ENCODE measurements at regions of chr14 and their contacts with region 1.

Region 1: GRCh38 chr14:69726761-69727511 is 40.0 kb upstream of the SRSF5 start:
- DNase-seq: peak; percentile 19
- ATAC-seq: peak; percentile 97
- H3K4me3 ChIP-seq: peak overlapping the region; percentile 58; the same call in 1 of the 2 replicates
- H3K27ac ChIP-seq: no peak overlapping the region
- H3K4me1 ChIP-seq: peaks cover 4% of the 10 kb centered on the region; the same call in 1 of the 2 replicates
- H3K27me3 ChIP-seq: no peaks in the 10 kb centered on the region
- CTCF ChIP-seq: peak; percentile 94 to 98 (median 96)
- EP300 ChIP-seq: no peak
- POLR2A ChIP-seq: no peak
- RAD21 ChIP-seq: peak; percentile 99

Region 2: GRCh38 chr14:69242311-69243224 is 484.4 kb before region 1 on chr14:
- CTCF ChIA-PET with region 1: no interaction called
- POLR2A ChIA-PET with region 1: no interaction called
- RAD21 ChIA-PET with region 1: no interaction called
- SMC1A ChIA-PET with region 1: interaction called, 5 read pairs
- in situ Hi-C with region 1: loop called (anchors 25 kb)
- intact Hi-C with region 1: no loop called
- DNase-seq: peak; percentile 13
- ATAC-seq: peak; percentile 89
- H3K4me3 ChIP-seq: no peak overlapping the region
- H3K27ac ChIP-seq: no peak overlapping the region
- H3K4me1 ChIP-seq: no peaks in the 10 kb centered on the region
- H3K27me3 ChIP-seq: no peaks in the 10 kb centered on the region
- CTCF ChIP-seq: peak; percentile 62 to 77 (median 69)
- EP300 ChIP-seq: no peak
- POLR2A ChIP-seq: no peak
- RAD21 ChIP-seq: peak; percentile 69

Region 3: DNA sequence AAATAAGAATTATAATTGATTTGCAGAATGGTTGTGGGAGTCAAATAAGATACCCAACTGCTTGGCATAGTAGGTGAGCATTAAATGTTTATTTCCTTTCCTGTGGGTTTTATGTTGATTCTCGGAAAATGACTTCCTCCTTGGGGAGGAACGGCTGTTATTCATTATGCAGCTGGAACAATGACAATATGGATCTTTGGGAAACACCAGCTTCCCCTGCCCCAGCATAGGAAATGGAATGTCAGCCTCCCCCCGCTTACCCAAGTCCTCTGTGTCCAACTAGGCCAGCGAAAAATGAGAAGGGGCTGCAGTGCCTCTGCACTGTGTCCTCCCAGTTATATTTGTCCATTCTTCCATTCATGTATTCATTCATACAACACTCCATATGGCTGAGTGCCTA is 140.5 kb before region 1 on chr14:
- CTCF ChIA-PET with region 1: interaction called, 16 read pairs
- POLR2A ChIA-PET with region 1: no interaction called
- RAD21 ChIA-PET with region 1: interaction called, 8 read pairs
- SMC1A ChIA-PET with region 1: interaction called, 12 read pairs
- in situ Hi-C with region 1: loop called (anchors 5 kb)
- intact Hi-C with region 1: loop called (anchors 1 kb)
- DNase-seq: no peak
- ATAC-seq: no peak
- H3K4me3 ChIP-seq: no peak overlapping the region
- H3K27ac ChIP-seq: no peak overlapping the region
- H3K4me1 ChIP-seq: no peaks in the 10 kb centered on the region
- H3K27me3 ChIP-seq: no peaks in the 10 kb centered on the region
- CTCF ChIP-seq: no peak
- EP300 ChIP-seq: no peak
- POLR2A ChIP-seq: no peak
- RAD21 ChIP-seq: no peak

Region 4: GRCh38 chr14:69600304-69600891 is 126.5 kb before region 1 on chr14:
- CTCF ChIA-PET with region 1: interaction called, 90 read pairs
- POLR2A ChIA-PET with region 1: interaction called, 4 read pairs
- RAD21 ChIA-PET with region 1: interaction called, 38 read pairs
- SMC1A ChIA-PET with region 1: interaction called, 85 read pairs
- in situ Hi-C with region 1: loop called (anchors 5 kb)
- intact Hi-C with region 1: loop called (anchors 1 kb)
- DNase-seq: no peak
- ATAC-seq: no peak
- H3K4me3 ChIP-seq: no peak overlapping the region
- H3K27ac ChIP-seq: no peak overlapping the region
- H3K4me1 ChIP-seq: no peaks in the 10 kb centered on the region
- H3K27me3 ChIP-seq: no peaks in the 10 kb centered on the region
- CTCF ChIP-seq: no peak
- EP300 ChIP-seq: no peak
- POLR2A ChIP-seq: no peak
- RAD21 ChIP-seq: no peak

Region 5: DNA sequence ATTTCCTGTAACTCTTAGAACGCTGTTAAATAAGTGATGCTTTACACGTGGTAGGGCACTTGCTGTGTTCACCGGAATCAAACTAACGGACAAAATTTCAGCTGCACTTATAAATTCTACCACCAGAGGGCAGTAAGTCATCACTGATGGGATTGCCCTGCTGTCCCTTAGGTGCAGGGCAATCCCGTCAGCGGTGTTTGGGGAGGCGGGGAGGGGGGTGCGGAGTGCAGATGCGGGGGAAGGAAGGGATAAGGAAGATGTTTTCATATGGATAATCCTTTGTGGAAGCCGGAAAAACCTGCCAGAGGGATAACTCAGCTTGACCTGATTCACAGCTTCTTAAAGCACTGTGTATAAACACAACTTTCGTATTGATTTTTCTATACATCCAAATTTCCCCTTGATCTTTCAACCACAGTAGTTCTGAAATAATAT is 91.8 kb after region 1 on chr14:
- CTCF ChIA-PET with region 1: interaction called, 11 read pairs
- POLR2A ChIA-PET with region 1: no interaction called
- RAD21 ChIA-PET with region 1: interaction called, 7 read pairs
- SMC1A ChIA-PET with region 1: interaction called, 6 read pairs
- in situ Hi-C with region 1: no loop called
- intact Hi-C with region 1: no loop called
- DNase-seq: peak; percentile 55
- ATAC-seq: peak; percentile 95
- H3K4me3 ChIP-seq: no peak overlapping the region
- H3K27ac ChIP-seq: no peak overlapping the region
- H3K4me1 ChIP-seq: no peaks in the 10 kb centered on the region
- H3K27me3 ChIP-seq: no peaks in the 10 kb centered on the region; a peak in 1 of 4 replicates
- CTCF ChIP-seq: peak; percentile 71 to 79 (median 75)
- EP300 ChIP-seq: no peak
- POLR2A ChIP-seq: no peak
- RAD21 ChIP-seq: peak; percentile 99

Region 6: GRCh38 chr14:70018713-70019211 is 291.8 kb after region 1 on chr14:
- CTCF ChIA-PET with region 1: interaction called, 3 read pairs
- POLR2A ChIA-PET with region 1: no interaction called
- RAD21 ChIA-PET with region 1: no interaction called
- SMC1A ChIA-PET with region 1: no interaction called
- in situ Hi-C with region 1: loop called (anchors 5 kb)
- intact Hi-C with region 1: loop called (anchors 5 kb)
- DNase-seq: no peak
- ATAC-seq: peak; percentile 69
- H3K4me3 ChIP-seq: no peak overlapping the region
- H3K27ac ChIP-seq: no peak overlapping the region
- H3K4me1 ChIP-seq: peaks cover 17% of the 10 kb centered on the region
- H3K27me3 ChIP-seq: no peaks in the 10 kb centered on the region; a peak in 1 of 4 replicates
- CTCF ChIP-seq: no peak
- EP300 ChIP-seq: no peak
- POLR2A ChIP-seq: no peak
- RAD21 ChIP-seq: no peak

Region 7: DNA sequence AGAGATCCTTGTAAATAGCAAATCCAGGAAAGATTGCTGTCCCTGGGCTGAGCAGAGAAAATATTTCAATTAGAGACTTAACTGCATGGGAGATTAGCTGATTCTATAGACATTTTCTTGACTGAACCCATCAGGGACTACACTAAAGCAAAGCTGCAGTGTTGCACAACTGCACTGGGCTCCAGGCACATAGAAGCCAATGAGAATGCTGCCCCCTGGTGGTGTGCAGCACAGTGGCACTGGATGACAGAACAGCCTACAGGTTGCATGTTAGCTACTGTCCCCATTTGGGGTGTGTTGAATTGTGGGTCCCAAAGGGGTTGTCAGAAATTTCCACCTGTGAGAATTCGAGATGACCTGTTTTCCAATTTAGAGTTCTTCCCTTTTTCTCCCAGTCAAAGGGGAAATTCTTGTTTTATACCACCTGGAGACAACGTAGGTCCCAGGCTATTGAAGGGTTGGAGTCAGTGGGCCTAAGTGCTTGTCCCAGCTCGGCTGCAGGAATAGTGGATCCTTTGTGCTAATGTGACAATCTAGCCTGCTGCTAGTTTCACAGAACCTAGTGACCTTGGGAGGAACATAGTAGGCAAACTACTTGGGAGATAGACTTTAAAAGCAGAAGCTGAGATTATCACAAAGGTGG is 347.1 kb after region 1 on chr14:
- CTCF ChIA-PET with region 1: interaction called, 10 read pairs
- POLR2A ChIA-PET with region 1: no interaction called
- RAD21 ChIA-PET with region 1: no interaction called
- SMC1A ChIA-PET with region 1: no interaction called
- in situ Hi-C with region 1: no loop called
- intact Hi-C with region 1: no loop called
- DNase-seq: no peak
- ATAC-seq: peak; percentile 92
- H3K4me3 ChIP-seq: no peak overlapping the region
- H3K27ac ChIP-seq: no peak overlapping the region
- H3K4me1 ChIP-seq: no peaks in the 10 kb centered on the region
- H3K27me3 ChIP-seq: peaks cover 0 to 2% of the 10 kb centered on the region in 2 experiments; a peak in 2 of 4 replicates
- CTCF ChIP-seq: peak; percentile 77 to 89 (median 82)
- EP300 ChIP-seq: no peak
- POLR2A ChIP-seq: no peak
- RAD21 ChIP-seq: peak; percentile 58

Region 8: DNA sequence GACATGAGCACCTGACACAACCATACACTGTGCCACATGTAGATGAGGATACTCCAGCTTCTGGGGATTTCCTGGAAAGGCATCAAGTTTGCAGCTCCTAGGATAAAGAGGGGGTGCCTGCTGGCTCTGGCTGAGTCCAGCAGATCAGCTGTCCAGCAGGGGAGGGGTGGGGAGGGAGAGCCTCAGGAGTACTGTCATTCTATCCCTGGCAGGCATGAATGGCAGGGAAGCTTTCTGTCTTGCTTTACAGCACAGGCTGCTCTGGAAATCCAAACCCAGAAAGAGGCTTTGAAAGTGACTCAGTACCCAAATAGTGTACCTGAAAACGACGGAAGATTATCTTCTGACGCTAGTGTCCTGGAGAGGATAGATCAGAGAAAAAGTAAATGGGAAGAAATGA is 429.7 kb after region 1 on chr14:
- CTCF ChIA-PET with region 1: no interaction called
- POLR2A ChIA-PET with region 1: no interaction called
- RAD21 ChIA-PET with region 1: no interaction called
- SMC1A ChIA-PET with region 1: no interaction called
- in situ Hi-C with region 1: no loop called
- intact Hi-C with region 1: no loop called
- DNase-seq: no peak
- ATAC-seq: no peak
- H3K4me3 ChIP-seq: no peak overlapping the region
- H3K27ac ChIP-seq: no peak overlapping the region
- H3K4me1 ChIP-seq: no peaks in the 10 kb centered on the region
- H3K27me3 ChIP-seq: no peaks in the 10 kb centered on the region; a peak in 1 of 4 replicates
- CTCF ChIP-seq: no peak
- EP300 ChIP-seq: no peak
- POLR2A ChIP-seq: no peak
- RAD21 ChIP-seq: no peak

Measured in GM12878 (cell line).